ENCODE measurements at regions of chr3 and their contacts with region 1.

Region 1: DNA sequence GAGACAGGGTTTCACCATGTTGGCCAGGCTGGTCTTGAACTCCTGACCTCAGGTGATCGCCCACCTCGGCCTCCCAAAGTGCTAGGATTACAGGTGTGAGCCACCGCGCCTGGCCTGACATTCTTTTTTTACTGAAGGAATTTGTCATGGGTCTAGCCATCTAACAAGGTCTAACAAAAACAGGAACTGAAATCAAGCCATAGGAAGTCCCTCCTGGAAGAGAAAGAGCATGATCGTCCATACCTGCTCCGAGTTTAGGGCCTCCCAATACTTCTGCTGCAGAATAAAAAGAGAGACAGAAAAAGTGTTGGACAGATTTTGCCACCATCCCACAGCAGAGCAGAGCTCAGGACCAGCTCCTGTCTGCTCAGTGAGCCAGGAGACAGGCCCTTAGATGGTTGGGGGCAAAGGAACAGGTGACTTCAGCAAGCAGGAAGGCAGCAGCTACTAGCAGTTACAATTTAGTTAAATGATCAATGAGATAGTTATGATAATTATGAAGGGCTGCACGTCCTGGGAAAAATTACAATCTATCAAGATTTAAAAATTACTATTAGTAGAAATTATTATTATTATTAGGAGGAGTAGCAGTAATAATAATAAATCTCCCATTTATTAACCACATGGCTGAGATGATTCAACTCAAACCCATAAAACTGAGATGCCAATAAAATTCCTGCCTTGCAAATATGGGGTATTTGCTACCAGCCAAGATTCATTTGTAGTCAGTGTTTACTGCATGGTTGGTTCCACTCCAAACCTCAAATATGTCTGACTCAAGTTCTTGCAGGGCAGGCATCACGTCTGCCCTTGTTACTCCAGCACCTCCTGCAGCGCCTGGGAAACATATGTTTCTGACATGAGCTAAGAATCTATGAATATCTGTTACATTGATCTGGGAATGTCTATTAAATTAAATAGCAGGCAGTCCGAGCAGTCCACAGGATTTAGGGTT is 40.1 kb downstream of the TMEM44 start:
- DNase-seq: peak; percentile 34 to 39
- ATAC-seq: peak; percentile 82 to 87
- H3K4me3 ChIP-seq: no peak overlapping the region
- H3K27ac ChIP-seq: peak overlapping the region in 1 of 4 donors; percentile 27
- H3K4me1 ChIP-seq: peaks cover 0 to 3% of the 10 kb centered on the region in 2 donors
- H3K27me3 ChIP-seq: no peaks in the 10 kb centered on the region
- CTCF ChIP-seq: no peak
- POLR2A ChIP-seq: no peak

Region 2: GRCh38 chr3:194472290-194472920 is 120.7 kb before region 1 on chr3:
- in situ Hi-C with region 1: no loop called
- intact Hi-C with region 1: loop called (anchors 1 kb)
- DNase-seq: no peak
- ATAC-seq: peak; percentile 78 to 83
- H3K4me3 ChIP-seq: no peak overlapping the region
- H3K27ac ChIP-seq: no peak overlapping the region
- H3K4me1 ChIP-seq: peaks cover 18 to 19% of the 10 kb centered on the region in 2 donors
- H3K27me3 ChIP-seq: no peaks in the 10 kb centered on the region
- CTCF ChIP-seq: peak; percentile 82 to 96 (median 91)
- POLR2A ChIP-seq: no peak

Region 3: DNA sequence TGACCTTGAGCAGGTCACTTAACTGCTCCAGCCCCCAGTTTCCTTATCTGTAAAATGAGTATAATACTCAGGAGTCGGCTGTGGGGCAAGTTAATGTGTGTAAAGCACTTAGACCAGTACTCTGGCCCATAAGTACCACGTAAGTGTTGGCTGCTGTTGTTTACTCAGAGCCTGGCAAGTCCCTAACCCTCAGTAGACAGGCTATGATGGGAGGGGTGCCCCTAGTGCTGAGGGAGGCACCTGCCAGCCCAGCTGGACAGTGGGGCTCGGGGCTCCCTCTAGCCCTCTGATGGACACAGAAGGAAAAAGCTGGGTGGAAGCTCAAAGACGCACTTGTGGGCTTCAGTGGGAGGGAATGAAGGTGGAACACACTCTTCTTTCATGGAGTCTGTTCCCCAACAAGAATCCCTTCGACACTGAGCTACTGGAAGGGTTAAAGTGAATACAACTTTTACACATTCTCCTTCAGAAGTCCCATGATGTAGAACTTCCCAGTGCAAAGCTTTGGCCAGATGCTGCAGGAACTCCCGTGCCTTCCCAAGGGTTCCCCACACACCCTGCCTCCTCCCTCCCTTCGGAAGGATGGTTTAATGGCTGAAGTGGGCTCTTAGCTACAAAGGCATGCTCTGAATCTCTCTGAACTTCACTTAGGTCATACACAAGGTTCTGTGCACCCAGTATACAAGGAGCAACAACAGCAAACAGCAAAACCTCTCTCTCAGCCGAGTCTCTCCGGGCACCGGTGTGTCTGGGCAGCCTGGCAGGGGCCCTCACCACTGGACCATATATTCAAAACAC is 14.7 kb after region 1 on chr3:
- in situ Hi-C with region 1: no loop called
- intact Hi-C with region 1: no loop called
- DNase-seq: no peak
- ATAC-seq: no peak
- H3K4me3 ChIP-seq: no peak overlapping the region
- H3K27ac ChIP-seq: no peak overlapping the region
- H3K4me1 ChIP-seq: no peaks in the 10 kb centered on the region
- H3K27me3 ChIP-seq: no peaks in the 10 kb centered on the region
- CTCF ChIP-seq: no peak
- POLR2A ChIP-seq: no peak

Region 4: DNA sequence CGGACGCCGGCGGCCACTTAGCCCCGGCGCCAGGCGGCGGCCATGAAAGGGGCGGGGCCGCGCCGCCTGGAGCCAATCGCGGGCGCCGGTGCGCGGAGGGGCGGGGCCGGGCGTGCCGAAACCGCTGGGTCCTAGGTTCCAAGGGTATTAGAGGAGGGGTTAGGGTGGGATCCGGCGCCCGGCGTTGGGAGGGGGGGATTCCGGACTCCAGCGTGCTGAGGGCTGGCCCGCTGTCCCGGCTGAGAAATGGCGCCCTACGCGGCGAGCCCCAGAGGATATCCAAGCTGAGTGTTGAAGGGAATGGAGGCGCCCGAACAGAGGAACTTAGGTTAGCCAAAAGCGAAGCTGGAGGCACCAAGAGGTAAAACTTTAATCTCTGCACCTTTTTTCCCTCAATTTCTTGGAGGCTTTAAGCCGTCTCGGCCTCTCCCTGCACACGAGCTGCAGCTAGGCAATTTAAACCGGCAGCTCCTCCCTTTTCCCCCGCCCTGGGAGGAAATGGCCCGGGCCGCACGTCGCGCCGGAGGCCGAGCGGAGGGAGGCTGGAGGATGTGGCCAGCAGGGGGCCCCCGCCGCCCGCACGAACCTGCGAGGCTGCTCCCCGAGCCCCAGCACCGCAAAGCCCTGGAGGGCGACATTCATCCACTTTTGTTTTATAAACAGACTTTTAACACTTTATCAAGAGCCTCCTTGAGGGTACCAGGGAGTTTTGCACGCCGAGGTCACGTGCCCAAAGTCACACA is 678.2 kb after region 1 on chr3 and contains the start of gene XXYLT1:
- in situ Hi-C with region 1: no loop called
- intact Hi-C with region 1: no loop called
- DNase-seq: peak; percentile 70 to 81
- ATAC-seq: peak; percentile 93 to 96
- H3K4me3 ChIP-seq: peak within 1 kb of the TSS; percentile 73 to 96 (median 85)
- H3K27ac ChIP-seq: peak within 1 kb of the TSS; percentile 78 to 95 (median 87)
- H3K4me1 ChIP-seq: peaks cover 15 to 19% of the 10 kb centered on the region in 2 donors
- H3K27me3 ChIP-seq: no peaks in the 10 kb centered on the region
- CTCF ChIP-seq: peak; percentile 84 to 94 (median 90)
- POLR2A ChIP-seq: no peak
- total RNA-seq, gene XXYLT1: 0.87 to 3.1 (median 1.3) TPM